ENCODE measurements at regions of chr13 and their contacts with region 1.

Region 1: DNA sequence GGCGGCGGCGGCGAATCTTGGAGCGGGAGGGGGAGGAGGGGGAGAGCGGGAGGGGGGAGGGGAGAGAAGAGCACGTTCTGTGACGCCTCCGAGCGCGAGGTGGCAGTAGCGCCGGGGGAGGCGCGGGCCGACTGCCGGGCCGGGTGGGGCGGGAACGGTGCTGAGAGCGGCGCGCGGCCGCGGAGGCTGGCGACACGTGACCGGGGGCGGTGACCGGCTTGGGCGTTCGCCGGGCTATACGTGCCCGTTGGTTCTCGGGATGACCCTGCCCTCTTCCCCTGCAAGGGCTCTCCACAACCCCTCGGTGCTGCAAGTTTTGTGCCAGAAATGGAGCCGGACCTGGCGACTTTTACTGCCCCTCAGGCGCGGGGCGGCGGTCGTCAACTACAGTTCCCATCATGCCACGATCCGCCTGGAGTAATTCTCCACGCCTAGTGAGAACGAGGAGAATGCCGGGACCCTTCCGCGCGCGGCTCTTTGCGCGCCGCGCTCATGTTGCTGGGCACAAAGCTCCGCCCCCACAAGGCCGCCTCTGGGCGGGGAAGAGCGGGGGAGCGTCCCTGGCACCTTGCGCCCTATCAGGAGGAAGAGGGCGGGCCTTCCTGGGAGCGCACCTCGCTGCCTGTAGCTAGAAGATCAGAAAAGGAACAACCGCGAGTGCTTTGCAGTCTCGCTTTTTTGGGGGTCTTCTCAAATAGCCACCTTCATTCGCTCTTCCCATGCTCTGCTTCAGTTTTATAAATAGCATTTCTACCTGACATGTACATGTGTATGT is at the start of gene KPNA3:
- DNase-seq: peak; percentile 90 to 98 (median 94)
- ATAC-seq: peak; percentile 89
- H3K4me3 ChIP-seq: peak within 1 kb of the TSS; percentile 84
- H3K4me3 Mint-ChIP-seq: peak within 1 kb of the TSS; percentile 100
- H3K27ac ChIP-seq: peak within 1 kb of the TSS; percentile 83 to 92
- H3K27ac Mint-ChIP-seq: peak within 1 kb of the TSS; percentile 95
- H3K4me1 ChIP-seq: peaks cover 22% of the 10 kb centered on the region
- H3K4me1 Mint-ChIP-seq: peaks cover 41% of the 10 kb centered on the region
- H3K27me3 ChIP-seq: no peaks in the 10 kb centered on the region
- H3K27me3 Mint-ChIP-seq: peaks cover 9% of the 10 kb centered on the region
- CTCF ChIP-seq: no peak
- total RNA-seq, gene KPNA3: 15.7 to 17.3 TPM

Region 2: DNA sequence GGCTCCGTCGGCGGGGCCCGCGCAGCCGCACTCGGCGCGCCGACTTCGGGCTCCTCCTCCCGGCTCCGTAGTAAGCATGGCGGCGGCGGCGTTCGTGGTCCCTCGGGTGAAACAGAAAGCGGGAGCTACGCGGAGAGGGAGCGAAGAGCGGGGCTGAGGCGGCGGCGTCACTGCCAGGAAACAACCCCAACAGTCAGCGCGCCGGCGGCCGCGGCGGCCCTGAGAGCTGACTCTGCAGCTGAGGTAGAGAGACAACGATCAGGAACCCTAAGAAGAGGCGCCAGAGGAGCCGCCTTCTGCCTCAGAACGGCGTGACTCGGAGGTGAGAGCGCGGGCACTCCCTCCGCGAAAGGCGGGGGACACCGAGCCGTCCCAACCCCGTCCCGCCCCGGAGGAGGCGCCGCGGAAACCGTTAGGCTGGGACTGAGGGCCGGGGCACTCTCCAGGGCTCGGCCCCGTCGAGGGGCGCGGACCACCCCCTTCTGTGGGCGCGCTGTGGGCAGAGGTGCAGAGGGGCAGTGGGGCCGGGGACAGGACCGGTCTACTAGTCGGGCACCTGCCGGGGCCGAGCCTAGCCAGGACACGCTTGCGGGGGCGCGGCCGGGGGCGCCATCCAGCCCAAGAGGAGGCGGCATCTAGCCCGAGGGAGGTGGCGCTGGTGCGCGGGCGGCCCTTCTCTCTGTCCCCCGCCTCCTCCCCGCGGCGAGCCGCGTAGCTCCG is 816.7 kb before region 1 on chr13 and contains the start of gene FNDC3A:
- CTCF ChIA-PET with region 1: no interaction called
- POLR2A ChIA-PET with region 1: interaction called, 16 read pairs
- intact Hi-C with region 1: loop called in 1 of 2 experiments (anchors 5 kb)
- DNase-seq: peak; percentile 74 to 94 (median 82)
- ATAC-seq: peak; percentile 68
- H3K4me3 ChIP-seq: peak within 1 kb of the TSS; percentile 80
- H3K4me3 Mint-ChIP-seq: peak within 1 kb of the TSS; percentile 99
- H3K27ac ChIP-seq: peak within 1 kb of the TSS; percentile 95 to 97
- H3K27ac Mint-ChIP-seq: peak within 1 kb of the TSS; percentile 98
- H3K4me1 ChIP-seq: peaks cover 9% of the 10 kb centered on the region
- H3K4me1 Mint-ChIP-seq: peaks cover 54% of the 10 kb centered on the region
- H3K27me3 ChIP-seq: no peaks in the 10 kb centered on the region
- H3K27me3 Mint-ChIP-seq: no peaks in the 10 kb centered on the region
- CTCF ChIP-seq: no peak
- total RNA-seq, gene FNDC3A: 27.7 to 28.6 TPM

Region 3: DNA sequence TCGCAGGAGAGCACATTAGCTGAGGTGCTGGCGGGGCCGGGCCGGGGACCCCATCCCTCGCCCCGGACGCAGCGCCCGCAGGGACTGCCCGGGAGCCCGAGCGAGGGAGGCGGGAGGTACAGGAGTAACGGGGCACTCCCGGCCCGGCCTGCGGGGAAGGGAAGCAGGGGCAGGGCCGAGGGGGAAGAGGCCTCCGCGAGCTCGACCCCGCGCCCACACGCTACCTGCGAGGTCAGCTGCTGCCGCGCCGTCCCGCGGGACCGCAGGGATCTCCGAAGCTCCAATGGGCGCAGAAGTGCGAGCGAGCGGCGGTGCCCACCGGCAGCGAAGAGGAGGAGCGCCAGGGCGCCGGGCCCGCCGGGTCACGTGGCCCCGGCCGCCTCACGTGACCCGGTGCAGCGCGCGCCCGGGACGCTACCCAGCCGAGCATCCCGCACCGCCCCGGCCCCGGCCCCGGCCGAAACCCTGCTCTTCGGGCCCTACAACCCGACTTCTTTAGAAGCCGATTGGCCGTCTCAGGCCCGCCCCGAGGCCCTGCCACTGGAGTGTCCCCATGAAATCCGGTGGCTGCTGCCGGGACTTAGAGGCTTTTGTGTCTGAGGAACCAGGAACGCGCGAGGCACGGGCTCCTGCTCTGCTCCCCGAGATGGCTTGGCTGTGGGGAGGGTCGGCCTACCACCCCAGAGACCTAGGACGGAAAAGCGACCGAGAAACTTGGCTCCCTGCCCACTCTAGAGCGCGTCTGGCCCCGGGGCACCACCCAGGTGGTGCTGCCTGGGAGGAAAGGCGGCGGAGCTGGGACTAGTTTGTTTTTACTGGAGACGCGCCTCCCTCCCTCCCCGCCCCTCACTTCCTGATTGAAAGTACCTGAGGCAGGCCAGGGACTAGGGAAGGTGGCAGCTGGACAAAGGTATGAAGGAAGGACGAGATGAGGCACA is 207.2 kb before region 1 on chr13 and contains the start of gene RCBTB1:
- CTCF ChIA-PET with region 1: interaction called, 4 read pairs
- POLR2A ChIA-PET with region 1: interaction called, 9 read pairs
- intact Hi-C with region 1: loop called in 1 of 2 experiments (anchors 5 kb)
- DNase-seq: peak; percentile 44 to 89 (median 62)
- ATAC-seq: peak; percentile 94
- H3K4me3 ChIP-seq: peak within 1 kb of the TSS; percentile 90
- H3K4me3 Mint-ChIP-seq: peak within 1 kb of the TSS; percentile 96
- H3K27ac ChIP-seq: peak within 1 kb of the TSS; percentile 59 to 74
- H3K27ac Mint-ChIP-seq: peak within 1 kb of the TSS; percentile 75
- H3K4me1 ChIP-seq: peaks cover 14% of the 10 kb centered on the region
- H3K4me1 Mint-ChIP-seq: peaks cover 40% of the 10 kb centered on the region
- H3K27me3 ChIP-seq: no peaks in the 10 kb centered on the region
- H3K27me3 Mint-ChIP-seq: no peaks in the 10 kb centered on the region
- CTCF ChIP-seq: no peak
- total RNA-seq, gene RCBTB1: 10.3 to 11.4 TPM

Region 4: DNA sequence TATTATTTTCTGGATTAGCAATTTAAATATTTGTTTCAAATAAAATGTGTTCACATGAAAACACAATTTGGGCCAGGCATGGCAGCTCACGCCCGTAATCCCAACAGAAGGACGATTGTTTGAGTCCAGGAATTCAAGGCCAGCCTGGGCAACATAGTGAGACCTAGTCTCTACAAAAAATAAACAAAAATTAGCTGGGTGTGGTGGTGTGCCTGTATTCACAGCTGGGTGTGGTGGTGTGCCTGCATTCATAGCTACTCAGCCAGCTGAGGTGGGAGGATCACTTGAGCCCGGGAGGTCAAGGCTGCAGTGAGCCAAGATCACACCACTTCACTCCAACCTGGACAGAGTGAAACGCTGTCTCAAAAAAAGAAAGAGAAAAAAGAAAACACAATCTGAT is 46.6 kb before region 1 on chr13:
- CTCF ChIA-PET with region 1: no interaction called
- POLR2A ChIA-PET with region 1: interaction called, 10 read pairs
- intact Hi-C with region 1: no loop called
- DNase-seq: no peak
- ATAC-seq: no peak
- H3K4me3 ChIP-seq: no peak overlapping the region
- H3K4me3 Mint-ChIP-seq: no peak overlapping the region
- H3K27ac ChIP-seq: no peak overlapping the region
- H3K27ac Mint-ChIP-seq: no peak overlapping the region
- H3K4me1 ChIP-seq: no peaks in the 10 kb centered on the region
- H3K4me1 Mint-ChIP-seq: peaks cover 18% of the 10 kb centered on the region
- H3K27me3 ChIP-seq: no peaks in the 10 kb centered on the region
- H3K27me3 Mint-ChIP-seq: no peaks in the 10 kb centered on the region
- CTCF ChIP-seq: no peak

Region 5: DNA sequence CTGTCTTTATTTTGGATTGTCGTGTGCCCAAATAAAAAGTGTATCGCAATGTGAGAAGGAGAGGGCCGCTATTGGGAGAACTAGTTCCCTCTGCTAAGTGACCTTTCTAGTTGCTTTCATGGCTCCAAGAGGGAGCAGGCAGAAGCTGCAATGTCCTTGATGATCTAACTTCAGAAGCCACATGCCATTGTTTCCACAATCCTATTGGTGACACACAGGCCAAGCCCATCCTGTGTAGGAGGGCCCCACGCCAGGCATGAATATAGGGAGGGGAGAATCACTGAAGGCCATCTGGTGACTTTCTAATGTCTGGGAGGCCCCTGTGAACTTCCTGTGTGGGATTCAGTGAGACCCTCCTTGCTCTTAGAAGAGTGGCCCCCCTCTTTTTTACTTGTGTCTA is 47.5 kb after region 1 on chr13:
- CTCF ChIA-PET with region 1: no interaction called
- POLR2A ChIA-PET with region 1: no interaction called
- intact Hi-C with region 1: loop called (anchors 5 kb)
- DNase-seq: no peak
- ATAC-seq: no peak
- H3K4me3 ChIP-seq: no peak overlapping the region
- H3K4me3 Mint-ChIP-seq: no peak overlapping the region
- H3K27ac ChIP-seq: no peak overlapping the region
- H3K27ac Mint-ChIP-seq: no peak overlapping the region
- H3K4me1 ChIP-seq: no peaks in the 10 kb centered on the region
- H3K4me1 Mint-ChIP-seq: no peaks in the 10 kb centered on the region
- H3K27me3 ChIP-seq: no peaks in the 10 kb centered on the region
- H3K27me3 Mint-ChIP-seq: no peaks in the 10 kb centered on the region
- CTCF ChIP-seq: no peak

Region 6: GRCh38 chr13:50801087-50801931 is 1008.6 kb after region 1 on chr13:
- CTCF ChIA-PET with region 1: no interaction called
- POLR2A ChIA-PET with region 1: no interaction called
- intact Hi-C with region 1: no loop called
- DNase-seq: peak; percentile 19 to 85 (median 48)
- ATAC-seq: peak; percentile 88
- H3K4me3 ChIP-seq: no peak overlapping the region
- H3K4me3 Mint-ChIP-seq: no peak overlapping the region
- H3K27ac ChIP-seq: no peak overlapping the region
- H3K27ac Mint-ChIP-seq: no peak overlapping the region
- H3K4me1 ChIP-seq: peaks cover 6% of the 10 kb centered on the region
- H3K4me1 Mint-ChIP-seq: peaks cover 7% of the 10 kb centered on the region
- H3K27me3 ChIP-seq: no peaks in the 10 kb centered on the region
- H3K27me3 Mint-ChIP-seq: no peaks in the 10 kb centered on the region
- CTCF ChIP-seq: peak; percentile 75

Region 7: DNA sequence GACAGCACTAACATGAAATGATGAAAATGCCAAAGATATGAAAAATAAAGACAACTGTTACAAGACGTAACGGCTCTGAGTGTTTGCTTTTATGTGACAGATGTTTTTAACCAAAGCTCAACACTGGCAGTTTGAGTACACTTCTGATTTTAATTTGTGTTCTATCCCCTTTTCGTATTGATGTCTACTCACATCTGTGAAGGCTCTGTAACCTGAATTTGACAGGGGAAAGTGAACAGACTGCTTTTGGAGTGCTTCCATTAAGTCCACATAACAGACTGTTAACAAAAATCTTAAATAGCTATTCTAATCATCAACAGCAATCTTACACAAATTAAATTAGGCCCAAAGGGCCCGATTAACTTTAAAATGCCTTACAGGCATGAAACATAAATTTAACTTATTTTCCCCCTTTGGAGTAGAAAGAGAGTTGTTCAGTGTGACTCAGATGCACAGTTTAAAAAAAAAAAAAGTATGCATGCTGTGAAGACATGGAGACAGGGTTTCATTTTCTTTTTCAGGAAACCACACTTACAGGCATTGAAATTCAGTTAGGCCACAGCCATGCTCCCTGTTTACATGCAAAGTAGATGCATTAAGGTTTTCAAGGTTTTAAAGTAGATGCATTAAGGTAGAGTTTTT is 1100.6 kb after region 1 on chr13:
- CTCF ChIA-PET with region 1: no interaction called
- POLR2A ChIA-PET with region 1: interaction called, 13 read pairs
- intact Hi-C with region 1: no loop called
- DNase-seq: peak in 5 of 14 experiments; percentile 22 to 83 (median 71)
- ATAC-seq: peak; percentile 92
- H3K4me3 ChIP-seq: peak overlapping the region; percentile 28
- H3K4me3 Mint-ChIP-seq: peak overlapping the region; percentile 83
- H3K27ac ChIP-seq: peak overlapping the region; percentile 66 to 81
- H3K27ac Mint-ChIP-seq: peak overlapping the region; percentile 84
- H3K4me1 ChIP-seq: peaks cover 19% of the 10 kb centered on the region
- H3K4me1 Mint-ChIP-seq: peaks cover 43% of the 10 kb centered on the region
- H3K27me3 ChIP-seq: no peaks in the 10 kb centered on the region
- H3K27me3 Mint-ChIP-seq: no peaks in the 10 kb centered on the region
- CTCF ChIP-seq: no peak

Measured in CD4-positive, alpha-beta T cell (primary cell).